ENCODE measurements at regions of chrX and their contacts with region 1.

Region 1: GRCh38 chrX:150365051-150365989 is 2.2 kb downstream of the MAMLD1 start:
- DNase-seq: peak; percentile 63 to 85 (median 73)
- H3K4me3 ChIP-seq: peak overlapping the region; percentile 31 to 77 (median 64)
- H3K27ac ChIP-seq: peak overlapping the region; percentile 65 to 95 (median 89)
- H3K27me3 ChIP-seq: peaks cover 0 to 52% (median 0%) of the 10 kb centered on the region in 45 donors
- CTCF ChIP-seq: peak; percentile 28 to 85 (median 66)

Region 2: DNA sequence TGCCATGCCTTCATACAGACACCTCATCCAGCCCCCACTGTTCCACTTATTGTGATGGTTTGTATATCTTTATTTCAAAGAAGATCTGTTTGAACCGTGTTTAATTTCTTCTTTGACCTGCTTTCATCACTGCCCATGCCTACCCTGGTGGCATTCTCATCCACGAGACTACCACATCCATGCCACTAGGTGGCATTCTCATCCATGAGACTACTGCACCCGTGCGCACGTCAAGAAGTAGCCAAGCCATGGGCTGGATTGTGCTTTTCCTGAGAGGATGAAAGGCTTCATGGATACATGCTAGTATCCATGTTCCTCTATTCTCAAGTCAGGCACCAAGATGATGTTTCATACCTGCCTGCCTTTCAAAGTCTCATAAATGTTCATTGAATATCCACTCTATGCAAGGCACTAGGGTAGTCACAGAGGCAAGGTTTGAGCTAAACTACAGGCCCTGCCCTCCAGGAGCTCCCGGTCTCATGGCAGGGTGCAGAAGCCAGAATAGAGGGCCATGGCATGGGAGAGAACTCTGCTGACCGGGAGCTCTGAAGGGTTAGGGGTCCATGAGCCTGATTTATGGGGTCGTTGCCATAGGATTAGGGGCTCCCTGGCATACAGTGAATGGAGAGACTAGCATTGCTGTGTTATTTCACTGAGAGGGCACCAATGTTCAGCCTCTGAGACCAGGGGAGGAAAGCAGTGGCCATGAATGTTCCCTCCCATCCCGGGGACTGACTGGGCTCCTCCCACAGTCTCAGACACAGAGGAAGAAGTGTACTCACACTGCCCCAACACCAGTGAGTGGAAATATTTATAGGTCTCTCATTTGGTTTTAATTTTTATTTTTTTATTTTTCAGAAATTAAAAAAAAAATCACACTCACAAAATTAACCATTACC is 402.2 kb before region 1 on chrX:
- intact Hi-C with region 1: loop called in 1 of 2 experiments (anchors 5 kb)
- DNase-seq: peak; percentile 22 to 78 (median 56)
- H3K4me3 ChIP-seq: no peak overlapping the region
- H3K27ac ChIP-seq: peak overlapping the region in 2 of 59 donors; percentile 16 to 28
- H3K27me3 ChIP-seq: peaks cover 0 to 48% (median 3%) of the 10 kb centered on the region in 45 donors
- CTCF ChIP-seq: peak; percentile 25 to 81 (median 67)

Region 3: DNA sequence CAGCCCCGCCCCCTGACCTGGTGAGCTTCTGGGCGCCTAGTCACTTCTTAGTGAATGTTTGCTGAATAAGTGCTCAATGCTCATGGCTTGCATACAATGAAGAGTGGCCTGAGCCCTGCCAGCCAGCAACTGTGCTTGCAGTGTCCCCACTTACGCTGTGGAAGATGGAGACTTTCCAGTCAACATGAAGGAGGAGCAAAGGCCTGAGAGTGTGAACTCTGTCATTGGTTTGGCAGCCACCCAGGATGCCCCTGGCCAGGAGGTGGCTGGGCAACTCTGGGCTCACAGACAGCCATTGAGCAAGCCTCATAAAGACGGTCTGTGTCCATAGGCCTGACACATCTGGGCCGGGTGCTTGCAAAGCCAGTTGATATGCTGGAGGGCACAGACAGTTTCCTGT is 74.3 kb before region 1 on chrX:
- intact Hi-C with region 1: loop called in 1 of 2 experiments (anchors 2 kb)
- DNase-seq: peak; percentile 12 to 92 (median 84)
- H3K4me3 ChIP-seq: no peak overlapping the region
- H3K27ac ChIP-seq: peak overlapping the region in 26 of 59 donors; percentile 19 to 79 (median 38)
- H3K27me3 ChIP-seq: peaks cover 0 to 11% (median 0%) of the 10 kb centered on the region in 45 donors
- CTCF ChIP-seq: peak in 5 of 56 donors; percentile 14 to 29 (median 20)

Region 4: DNA sequence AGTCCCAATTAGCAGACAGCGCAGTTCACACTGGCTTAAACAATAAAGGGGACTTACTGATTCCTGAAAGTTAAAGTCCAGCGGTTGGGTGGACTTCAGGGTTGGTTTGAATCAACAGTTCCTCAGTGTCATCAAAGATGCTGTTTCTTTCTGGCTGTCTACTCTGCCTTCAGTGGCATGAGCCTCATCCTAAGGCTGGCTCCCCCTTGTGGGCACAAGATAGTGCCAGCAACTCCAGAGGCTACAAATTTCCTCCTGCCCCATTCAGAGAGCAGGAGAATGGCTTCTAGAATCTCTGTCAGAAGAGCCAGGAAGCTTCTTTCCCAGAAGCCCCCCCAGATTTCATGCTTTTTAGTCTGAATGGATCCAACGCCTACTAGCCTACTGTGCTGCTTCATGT is 120.7 kb after region 1 on chrX:
- intact Hi-C with region 1: loop called (anchors 2 to 5 kb)
- DNase-seq: peak in 7 of 10 donors; percentile 45 to 69 (median 65)
- H3K4me3 ChIP-seq: no peak overlapping the region
- H3K27ac ChIP-seq: peak overlapping the region in 1 of 59 donors; percentile 29
- H3K27me3 ChIP-seq: peaks cover 0 to 47% (median 2%) of the 10 kb centered on the region in 45 donors
- CTCF ChIP-seq: peak in 55 of 56 donors; percentile 36 to 77 (median 64)

Region 5: GRCh38 chrX:150587585-150588503 is 222.5 kb after region 1 on chrX:
- intact Hi-C with region 1: loop called in 1 of 2 experiments (anchors 2 kb)
- DNase-seq: peak in 3 of 10 donors; percentile 16 to 45 (median 29)
- H3K4me3 ChIP-seq: no peak overlapping the region
- H3K27ac ChIP-seq: no peak overlapping the region
- H3K27me3 ChIP-seq: peaks cover 0 to 32% (median 0%) of the 10 kb centered on the region in 45 donors
- CTCF ChIP-seq: peak; percentile 37 to 73 (median 60)